Left colon (tissue), 2 donors: ENCODE measurements at regions of chr16 and their contacts with region 1.

Region 1: DNA sequence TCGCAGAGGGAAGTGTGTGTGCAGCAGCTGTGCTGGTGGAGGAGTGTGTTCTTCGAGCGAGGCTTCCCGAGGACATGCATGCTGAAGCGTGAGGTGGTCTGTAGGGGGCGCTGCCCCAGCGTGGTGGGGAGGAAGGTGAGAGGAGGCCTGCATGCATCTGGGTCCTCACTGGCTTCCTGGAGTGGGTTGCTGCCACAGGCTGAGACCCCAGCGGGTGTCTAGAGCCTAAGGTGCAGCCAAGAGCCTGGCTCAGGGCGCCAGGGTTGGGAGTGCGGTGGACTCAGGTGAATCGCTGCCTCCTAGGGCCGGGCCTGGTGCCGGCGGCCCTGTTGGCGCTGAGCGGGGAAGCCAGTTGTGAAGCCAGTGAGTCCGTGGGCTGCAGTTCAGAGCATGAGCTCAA is 7.5 kb upstream of the HSD3B7 start:
- DNase-seq: no peak
- ATAC-seq: no peak

Region 2: DNA sequence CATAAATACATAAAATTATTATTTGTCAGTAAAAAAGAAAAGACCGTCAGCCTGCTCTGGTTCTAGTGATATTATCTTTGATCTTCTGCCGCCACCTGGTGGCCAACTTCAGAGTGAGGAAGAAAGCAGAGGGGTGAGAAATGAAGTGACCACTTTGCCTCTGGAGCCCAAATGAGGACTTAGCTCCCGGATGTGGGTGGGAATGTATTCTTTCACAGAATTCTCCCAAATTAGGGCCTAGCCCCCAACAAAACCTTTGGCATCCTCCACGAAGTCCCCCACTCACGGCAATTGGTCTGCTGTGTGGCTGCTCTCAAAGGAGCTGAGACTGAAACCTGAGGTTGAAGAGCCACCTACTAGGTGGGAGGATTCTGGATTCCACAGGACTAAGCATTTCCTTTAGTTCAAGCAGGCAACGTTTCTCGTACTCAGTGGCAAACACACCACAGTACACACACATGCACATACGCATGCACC is 891.2 kb after region 1 on chr16:
- intact Hi-C with region 1: loop called in 1 of 2 experiments (anchors 10 kb)
- DNase-seq: peak; percentile 67 to 92
- ATAC-seq: peak; percentile 56